ENCODE measurements at regions of chrX and their contacts with region 1.

Region 1: GRCh38 chrX:78555401-78555980 is 103.6 kb downstream of the RTL3 start:
- DNase-seq: no peak
- ATAC-seq: no peak
- H3K4me3 ChIP-seq: no peak overlapping the region
- H3K27ac ChIP-seq: no peak overlapping the region
- H3K4me1 ChIP-seq: no peaks in the 10 kb centered on the region
- H3K27me3 ChIP-seq: no peaks in the 10 kb centered on the region
- CTCF ChIP-seq: peak; percentile 33; the same call in 1 of the 2 replicates

Region 2: DNA sequence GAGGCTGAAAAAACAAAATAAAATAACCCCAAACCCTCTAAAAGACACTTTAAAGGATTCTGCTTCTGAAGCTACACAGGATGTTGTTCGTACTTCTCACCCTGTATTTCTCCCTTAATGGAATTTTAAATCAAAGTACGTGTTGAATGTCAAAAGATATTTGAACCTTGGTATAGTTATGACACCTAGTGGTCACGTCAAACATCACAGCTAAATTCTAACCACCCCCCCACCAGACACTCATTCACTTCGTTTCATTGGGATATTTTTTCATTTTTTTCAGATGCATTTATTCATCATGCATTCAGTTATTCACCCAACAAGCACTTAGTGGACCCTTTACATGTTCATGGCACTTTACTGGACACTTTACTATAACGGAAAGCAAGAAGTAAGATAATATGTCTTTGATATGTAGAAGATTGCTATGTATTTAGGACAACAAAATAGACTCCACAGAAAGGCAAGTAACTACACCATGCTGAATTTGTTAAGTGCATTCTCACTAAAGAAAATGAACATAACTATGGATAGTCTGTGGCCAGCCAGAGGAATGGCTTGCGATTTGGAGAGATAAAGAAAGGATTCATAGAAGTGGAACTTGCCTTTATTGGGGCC is 526.5 kb after region 1 on chrX:
- CTCF ChIA-PET with region 1: no interaction called
- POLR2A ChIA-PET with region 1: no interaction called
- in situ Hi-C with region 1: no loop called
- intact Hi-C with region 1: loop called (anchors 5 kb)
- DNase-seq: peak; percentile 10
- ATAC-seq: peak; percentile 63; the same call in 1 of the 2 replicates
- H3K4me3 ChIP-seq: no peak overlapping the region
- H3K27ac ChIP-seq: no peak overlapping the region
- H3K4me1 ChIP-seq: no peaks in the 10 kb centered on the region
- H3K27me3 ChIP-seq: no peaks in the 10 kb centered on the region
- CTCF ChIP-seq: peak; percentile 62; the same call in 1 of the 2 replicates

Region 3: GRCh38 chrX:79412972-79413371 is 857.5 kb after region 1 on chrX:
- CTCF ChIA-PET with region 1: interaction called, 3 read pairs
- POLR2A ChIA-PET with region 1: no interaction called
- in situ Hi-C with region 1: no loop called
- intact Hi-C with region 1: loop called (anchors 5 kb)
- DNase-seq: peak; percentile 1
- ATAC-seq: no peak
- H3K4me3 ChIP-seq: peak overlapping the region; percentile 6 to 21; a peak in 3 of 4 replicates
- H3K27ac ChIP-seq: no peak overlapping the region
- H3K4me1 ChIP-seq: no peaks in the 10 kb centered on the region
- H3K27me3 ChIP-seq: no peaks in the 10 kb centered on the region
- CTCF ChIP-seq: peak; percentile 51; the same call in 1 of the 2 replicates